Lower leg skin (tissue), 4 donors: ENCODE measurements at regions of chr12 and their contacts with region 1.

Region 1: DNA sequence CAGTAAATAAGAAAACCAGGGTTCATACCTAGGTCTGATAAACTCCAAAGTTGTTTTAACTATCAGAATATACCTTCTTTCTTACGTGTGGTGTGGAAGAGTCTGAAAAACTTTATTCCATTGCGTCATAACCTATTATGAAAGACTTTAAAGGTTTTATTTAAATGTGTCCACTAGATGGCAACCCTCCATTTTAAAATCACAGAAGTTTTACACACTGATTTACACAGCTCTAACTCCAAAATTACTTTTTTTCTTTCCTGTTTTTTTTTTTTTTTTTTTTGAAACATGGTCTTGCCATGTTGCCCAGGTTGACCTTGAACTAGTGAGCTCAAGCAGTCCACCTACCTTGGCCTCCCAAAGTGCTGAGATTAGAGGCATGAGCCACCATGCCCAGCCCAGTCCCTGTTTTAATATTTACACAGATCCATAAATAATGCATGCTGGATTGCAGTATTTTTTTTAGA is 17.3 kb upstream of the TMPRSS12 start:
- DNase-seq: no peak
- H3K4me3 ChIP-seq: no peak overlapping the region
- CTCF ChIP-seq: no peak
- POLR2A ChIP-seq: no peak

Region 2: GRCh38 chr12:49987625-49988303 is 837.6 kb before region 1 on chr12:
- intact Hi-C with region 1: no loop called
- DNase-seq: no peak
- H3K4me3 ChIP-seq: no peak overlapping the region
- CTCF ChIP-seq: no peak
- POLR2A ChIP-seq: no peak

Region 3: DNA sequence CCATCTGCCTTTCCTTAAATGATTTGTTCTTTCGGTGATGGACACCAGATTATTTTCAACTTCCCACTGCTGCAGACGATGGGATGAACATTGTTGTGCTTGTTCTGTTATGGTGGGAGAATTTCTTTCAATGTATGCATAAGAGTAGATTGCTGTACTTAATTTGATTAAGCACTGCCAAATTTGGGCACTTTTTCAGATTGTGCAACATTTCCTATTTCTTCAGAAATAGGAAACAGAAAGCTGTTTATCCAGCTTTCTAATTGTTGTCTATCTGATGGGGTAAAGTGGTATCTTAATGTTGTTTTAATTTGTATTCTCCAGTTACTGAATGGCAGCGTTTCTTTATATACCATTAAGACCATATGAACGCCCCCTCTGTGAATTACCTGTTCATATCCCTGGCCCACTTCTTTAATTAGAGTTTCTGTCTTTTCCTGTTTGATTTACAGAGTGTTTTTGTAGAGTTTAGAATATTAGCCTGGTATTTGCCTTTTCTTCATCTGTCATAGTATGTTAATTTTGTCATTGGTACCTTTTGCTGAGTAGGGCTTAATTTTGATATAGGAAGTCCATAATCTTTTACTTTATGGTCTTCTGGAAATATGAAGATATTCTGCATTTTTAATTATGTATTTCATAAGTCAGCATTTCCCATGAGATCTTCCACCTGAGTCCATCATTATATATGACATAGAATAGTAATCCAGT is 261.0 kb before region 1 on chr12:
- intact Hi-C with region 1: no loop called
- DNase-seq: no peak
- H3K4me3 ChIP-seq: no peak overlapping the region
- CTCF ChIP-seq: no peak
- POLR2A ChIP-seq: no peak

Region 4: GRCh38 chr12:50986966-50987737 is 161.7 kb after region 1 on chr12:
- intact Hi-C with region 1: loop called (anchors 5 kb)
- DNase-seq: peak in 1 of 2 donors; percentile 54
- H3K4me3 ChIP-seq: no peak overlapping the region
- CTCF ChIP-seq: no peak
- POLR2A ChIP-seq: no peak

Region 5: GRCh38 chr12:51160814-51161459 is 335.5 kb after region 1 on chr12:
- intact Hi-C with region 1: no loop called
- DNase-seq: no peak
- H3K4me3 ChIP-seq: no peak overlapping the region
- CTCF ChIP-seq: no peak
- POLR2A ChIP-seq: no peak